B cell (primary cell): ENCODE measurements at regions of chr19 and their contacts with region 1.

Region 1: DNA sequence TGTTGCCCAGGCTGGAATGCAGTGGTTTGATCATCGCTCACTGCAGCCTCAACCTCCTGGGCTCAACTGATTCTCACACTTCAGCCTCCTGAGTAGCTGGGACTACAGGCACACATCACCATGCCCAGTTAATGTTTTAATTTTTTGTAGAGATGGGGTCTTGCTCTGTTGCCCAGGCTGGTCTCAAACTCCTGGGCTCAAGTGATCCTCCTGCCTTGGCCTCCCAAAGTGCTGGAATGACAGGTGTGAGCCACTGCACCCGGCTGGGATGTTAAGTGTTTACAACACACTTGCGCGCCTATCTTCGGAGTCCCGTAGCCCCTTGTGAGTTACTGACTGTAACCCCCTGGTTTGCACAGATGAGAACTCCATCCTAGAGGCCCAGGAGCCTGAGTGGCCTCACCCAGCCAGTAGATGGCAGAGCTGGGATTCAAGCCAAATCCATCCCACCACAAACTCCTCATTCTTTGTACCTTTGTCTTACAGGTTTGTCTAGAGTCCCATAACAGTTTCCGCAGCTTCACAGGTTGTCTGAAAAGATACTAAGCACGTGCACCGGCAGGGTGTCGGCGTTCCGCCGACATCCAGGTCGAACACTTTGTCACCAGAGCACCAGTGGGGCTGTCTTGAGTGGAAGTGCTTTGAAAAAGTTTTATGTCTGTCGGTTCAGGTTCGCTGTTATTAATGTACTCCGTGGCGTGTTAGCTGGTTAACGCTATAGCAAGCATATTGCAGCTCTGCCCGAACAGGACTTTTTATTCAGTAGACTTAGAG is 14.7 kb downstream of the MAG start:
- DNase-seq: peak; percentile 58
- ATAC-seq: peak; percentile 62
- H3K4me3 ChIP-seq: no peak overlapping the region
- H3K4me3 Mint-ChIP-seq: peak overlapping the region; percentile 29
- H3K27ac ChIP-seq: no peak overlapping the region
- H3K27ac Mint-ChIP-seq: peak overlapping the region; percentile 65
- H3K4me1 ChIP-seq: peaks cover 21 to 42% of the 10 kb centered on the region in 2 donors
- H3K4me1 Mint-ChIP-seq: peaks cover 45% of the 10 kb centered on the region
- H3K27me3 ChIP-seq: no peaks in the 10 kb centered on the region
- H3K27me3 Mint-ChIP-seq: no peaks in the 10 kb centered on the region
- CTCF ChIP-seq: peak; percentile 33

Region 2: DNA sequence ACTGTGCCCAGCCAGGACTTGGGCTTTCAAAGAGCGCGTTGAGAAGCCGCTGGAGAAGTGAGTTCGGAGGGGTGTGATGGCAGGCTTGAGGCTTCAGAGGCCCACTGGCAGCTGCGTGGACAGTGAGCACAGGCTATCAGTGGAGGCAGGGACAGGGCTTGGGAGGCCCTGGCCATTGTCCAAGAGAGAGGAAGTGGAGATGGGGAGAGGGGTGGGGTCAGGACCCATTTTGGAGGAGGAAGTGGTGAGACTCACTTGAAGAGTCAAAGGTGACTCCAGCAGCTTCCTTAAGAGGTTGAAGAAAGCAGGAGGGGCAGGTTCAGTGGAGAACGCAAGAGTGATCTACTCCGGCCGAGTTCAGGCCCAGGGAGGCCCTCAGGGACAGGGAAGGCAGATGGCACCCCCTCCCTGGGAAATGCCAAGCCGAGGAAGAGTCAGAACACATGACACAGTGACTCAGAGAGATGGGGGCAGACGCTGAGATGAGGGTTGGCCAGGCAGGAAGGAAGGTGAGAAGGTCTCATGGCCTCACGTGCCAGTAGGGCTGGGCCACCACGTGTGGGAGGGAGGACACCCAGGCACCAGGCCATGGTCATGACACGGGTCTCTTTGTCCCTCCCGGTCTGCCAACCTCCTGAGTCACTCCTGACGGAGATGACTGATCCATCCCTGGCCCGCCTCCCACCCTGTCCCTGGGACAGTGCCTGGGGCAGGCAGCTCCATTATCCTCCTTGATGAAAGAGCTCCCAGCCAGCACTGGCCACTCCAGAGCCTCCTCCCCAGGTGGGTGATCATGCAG is 12.2 kb after region 1 on chr19:
- CTCF ChIA-PET with region 1: interaction called, 10 read pairs
- POLR2A ChIA-PET with region 1: interaction called, 12 read pairs
- intact Hi-C with region 1: no loop called
- DNase-seq: peak; percentile 65
- ATAC-seq: peak; percentile 25
- H3K4me3 ChIP-seq: peak overlapping the region in 1 of 5 experiments; percentile 53
- H3K4me3 Mint-ChIP-seq: peak overlapping the region; percentile 75
- H3K27ac ChIP-seq: peak overlapping the region; percentile 94 to 97
- H3K27ac Mint-ChIP-seq: peak overlapping the region; percentile 91
- H3K4me1 ChIP-seq: peaks cover 81 to 97% of the 10 kb centered on the region in 2 donors
- H3K4me1 Mint-ChIP-seq: peaks cover 85% of the 10 kb centered on the region
- H3K27me3 ChIP-seq: no peaks in the 10 kb centered on the region
- H3K27me3 Mint-ChIP-seq: no peaks in the 10 kb centered on the region
- CTCF ChIP-seq: no peak

Region 3: GRCh38 chr19:35545001-35545911 is 238.6 kb after region 1 on chr19 and contains the start of gene TMEM147:
- CTCF ChIA-PET with region 1: no interaction called
- POLR2A ChIA-PET with region 1: no interaction called
- intact Hi-C with region 1: no loop called
- DNase-seq: peak; percentile 87
- ATAC-seq: peak; percentile 92
- H3K4me3 ChIP-seq: peak within 1 kb of the TSS; percentile 45 to 97 (median 86)
- H3K4me3 Mint-ChIP-seq: peak within 1 kb of the TSS; percentile 91
- H3K27ac ChIP-seq: peak within 1 kb of the TSS; percentile 87 to 92
- H3K27ac Mint-ChIP-seq: peak within 1 kb of the TSS; percentile 89
- H3K4me1 ChIP-seq: peaks cover 16 to 34% of the 10 kb centered on the region in 2 donors
- H3K4me1 Mint-ChIP-seq: peaks cover 37% of the 10 kb centered on the region
- H3K27me3 ChIP-seq: no peaks in the 10 kb centered on the region
- H3K27me3 Mint-ChIP-seq: no peaks in the 10 kb centered on the region
- CTCF ChIP-seq: no peak
- total RNA-seq, gene TMEM147: 39.8 and 41.6 TPM in 2 replicates

Region 4: GRCh38 chr19:35845215-35846037 is 538.8 kb after region 1 on chr19:
- CTCF ChIA-PET with region 1: no interaction called
- POLR2A ChIA-PET with region 1: no interaction called
- intact Hi-C with region 1: no loop called
- DNase-seq: no peak
- ATAC-seq: peak; percentile 33
- H3K4me3 ChIP-seq: peak overlapping the region in 3 of 5 experiments; percentile 18 to 36 (median 23)
- H3K4me3 Mint-ChIP-seq: peak overlapping the region; percentile 59
- H3K27ac ChIP-seq: no peak overlapping the region
- H3K27ac Mint-ChIP-seq: no peak overlapping the region
- H3K4me1 ChIP-seq: peaks cover 15 to 32% of the 10 kb centered on the region in 2 donors
- H3K4me1 Mint-ChIP-seq: peaks cover 19% of the 10 kb centered on the region
- H3K27me3 ChIP-seq: peaks cover 0 to 67% (median 33%) of the 10 kb centered on the region in 4 experiments
- H3K27me3 Mint-ChIP-seq: peaks cover 56% of the 10 kb centered on the region
- CTCF ChIP-seq: no peak